Activated B cell treated with CpG ODN at 0.5 μM for 24 hours (primary cell): ENCODE measurements at regions of chr6 and their contacts with region 1.

Region 1: GRCh38 chr6:36302227-36302976 is 32.5 kb downstream of the PNPLA1 start:
- DNase-seq: peak; percentile 65
- ATAC-seq: peak; percentile 99
- H3K4me3 Mint-ChIP-seq: no peak overlapping the region
- H3K27ac Mint-ChIP-seq: no peak overlapping the region
- H3K4me1 Mint-ChIP-seq: peaks cover 1% of the 10 kb centered on the region
- H3K27me3 Mint-ChIP-seq: peaks cover 21% of the 10 kb centered on the region
- CTCF ChIP-seq: peak; percentile 82

Region 2: DNA sequence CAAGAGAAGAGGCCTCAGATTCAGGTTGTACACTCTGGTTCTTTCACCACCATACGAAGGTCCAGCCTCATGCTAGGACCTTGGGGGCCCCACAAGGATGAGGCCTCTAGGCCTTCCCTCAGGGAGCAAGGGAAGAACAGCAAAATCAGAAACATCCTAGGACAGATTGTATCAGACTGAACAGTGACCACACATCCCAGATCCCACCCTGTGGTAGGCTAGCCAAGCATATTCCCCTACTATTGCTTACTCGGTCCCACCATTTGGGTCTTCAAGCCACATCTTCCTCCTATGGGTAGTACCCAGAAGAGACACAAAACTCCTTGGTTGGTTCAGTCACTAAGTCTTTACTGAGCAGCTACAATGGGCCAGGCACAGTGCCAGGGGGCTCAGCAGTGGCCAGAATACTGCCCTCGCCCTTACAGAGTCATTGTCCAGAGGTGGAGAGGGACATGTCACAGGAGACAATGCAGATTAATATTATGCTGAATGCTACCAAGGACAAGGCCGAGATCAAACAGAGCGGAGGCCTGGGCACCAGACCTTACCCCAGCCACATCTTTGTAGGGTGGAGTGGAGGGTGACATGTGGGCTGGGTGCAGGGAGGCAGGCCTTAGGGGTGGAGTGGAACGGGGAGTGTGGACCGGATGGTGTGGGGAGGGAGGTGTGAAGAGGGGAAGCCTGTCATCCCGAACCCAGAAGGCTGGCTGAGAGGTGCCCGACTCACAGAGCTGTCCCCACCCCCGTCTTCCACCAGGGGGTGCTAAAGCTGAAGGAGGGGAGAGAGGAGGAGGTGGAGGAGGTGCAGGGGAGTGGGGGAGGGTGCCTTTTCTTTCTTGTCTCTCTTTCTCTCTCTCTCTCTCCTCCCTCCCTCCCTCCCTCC is 178.9 kb before region 1 on chr6:
- CTCF ChIA-PET with region 1: no interaction called
- POLR2A ChIA-PET with region 1: no interaction called
- intact Hi-C with region 1: loop called (anchors 2 kb)
- DNase-seq: peak; percentile 72
- ATAC-seq: peak; percentile 73
- H3K4me3 Mint-ChIP-seq: peak overlapping the region; percentile 41
- H3K27ac Mint-ChIP-seq: peak overlapping the region; percentile 86
- H3K4me1 Mint-ChIP-seq: peaks cover 73% of the 10 kb centered on the region
- H3K27me3 Mint-ChIP-seq: no peaks in the 10 kb centered on the region
- CTCF ChIP-seq: no peak

Region 3: DNA sequence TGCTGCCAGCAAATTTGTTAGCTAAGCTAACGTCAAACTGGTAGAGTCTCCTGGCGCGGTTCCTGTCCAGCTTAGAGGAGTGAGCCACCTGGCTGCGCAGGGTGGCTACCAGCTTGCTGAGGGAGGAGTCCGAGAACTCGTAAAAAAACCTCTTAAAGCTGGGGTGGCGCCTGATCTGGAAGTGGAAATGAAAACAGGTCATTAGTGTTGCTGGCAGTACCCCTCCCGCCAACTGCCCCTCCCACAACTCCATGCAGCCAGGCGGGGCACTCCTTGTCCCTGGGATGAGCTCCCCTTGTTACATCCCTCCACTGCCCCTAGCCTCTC is 17.0 kb after region 1 on chr6:
- CTCF ChIA-PET with region 1: interaction called, 13 read pairs
- POLR2A ChIA-PET with region 1: no interaction called
- intact Hi-C with region 1: no loop called
- DNase-seq: no peak
- ATAC-seq: no peak
- H3K4me3 Mint-ChIP-seq: no peak overlapping the region
- H3K27ac Mint-ChIP-seq: no peak overlapping the region
- H3K4me1 Mint-ChIP-seq: no peaks in the 10 kb centered on the region
- H3K27me3 Mint-ChIP-seq: no peaks in the 10 kb centered on the region
- CTCF ChIP-seq: no peak

Region 4: DNA sequence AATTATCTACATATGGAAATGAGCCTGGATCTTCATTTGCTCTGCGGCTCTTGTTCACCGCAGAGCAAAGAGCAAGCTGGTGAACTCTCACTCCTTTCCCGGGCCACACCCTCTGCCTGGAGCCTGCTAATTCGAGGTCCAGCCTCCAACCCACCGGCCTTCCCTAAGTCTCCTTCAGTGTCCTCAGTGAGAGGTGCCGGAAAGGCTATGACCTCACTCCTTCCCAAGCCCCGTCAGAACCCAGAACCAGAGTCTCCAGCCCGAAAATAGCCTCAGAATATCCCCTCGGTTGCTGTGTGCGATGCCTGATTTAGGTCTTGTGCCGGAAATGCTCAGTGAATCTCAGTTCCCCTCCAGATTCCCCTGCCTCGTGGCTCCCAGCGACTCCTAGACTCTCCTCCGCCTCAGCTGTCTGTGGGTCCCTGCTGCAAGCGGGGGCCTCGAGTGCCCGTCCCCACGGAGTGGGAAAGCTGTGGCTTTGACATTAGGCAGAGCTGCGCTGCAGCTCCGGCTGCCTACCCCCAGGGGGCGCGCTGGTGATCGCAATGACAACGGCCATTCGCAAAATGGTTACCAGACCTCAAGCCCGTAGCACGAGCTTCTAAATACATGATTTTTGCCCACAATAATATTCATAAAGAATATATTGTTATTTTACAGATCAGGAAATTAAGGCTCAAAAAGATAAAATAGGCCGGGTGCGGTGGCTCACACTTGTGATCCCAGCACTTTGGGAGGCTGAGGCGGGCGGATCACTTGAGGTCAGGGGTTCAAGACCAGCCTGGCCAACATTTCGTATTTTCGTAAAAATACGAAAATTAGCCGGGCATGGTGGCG is 38.4 kb after region 1 on chr6:
- CTCF ChIA-PET with region 1: interaction called, 13 read pairs
- POLR2A ChIA-PET with region 1: interaction called, 3 read pairs
- intact Hi-C with region 1: no loop called
- DNase-seq: peak; percentile 61
- ATAC-seq: peak; percentile 85
- H3K4me3 Mint-ChIP-seq: peak overlapping the region; percentile 68
- H3K27ac Mint-ChIP-seq: no peak overlapping the region
- H3K4me1 Mint-ChIP-seq: peaks cover 26% of the 10 kb centered on the region
- H3K27me3 Mint-ChIP-seq: peaks cover 6% of the 10 kb centered on the region
- CTCF ChIP-seq: peak; percentile 88